BJ (cell line): ENCODE measurements at regions of chr9 and their contacts with region 1.

Region 1: DNA sequence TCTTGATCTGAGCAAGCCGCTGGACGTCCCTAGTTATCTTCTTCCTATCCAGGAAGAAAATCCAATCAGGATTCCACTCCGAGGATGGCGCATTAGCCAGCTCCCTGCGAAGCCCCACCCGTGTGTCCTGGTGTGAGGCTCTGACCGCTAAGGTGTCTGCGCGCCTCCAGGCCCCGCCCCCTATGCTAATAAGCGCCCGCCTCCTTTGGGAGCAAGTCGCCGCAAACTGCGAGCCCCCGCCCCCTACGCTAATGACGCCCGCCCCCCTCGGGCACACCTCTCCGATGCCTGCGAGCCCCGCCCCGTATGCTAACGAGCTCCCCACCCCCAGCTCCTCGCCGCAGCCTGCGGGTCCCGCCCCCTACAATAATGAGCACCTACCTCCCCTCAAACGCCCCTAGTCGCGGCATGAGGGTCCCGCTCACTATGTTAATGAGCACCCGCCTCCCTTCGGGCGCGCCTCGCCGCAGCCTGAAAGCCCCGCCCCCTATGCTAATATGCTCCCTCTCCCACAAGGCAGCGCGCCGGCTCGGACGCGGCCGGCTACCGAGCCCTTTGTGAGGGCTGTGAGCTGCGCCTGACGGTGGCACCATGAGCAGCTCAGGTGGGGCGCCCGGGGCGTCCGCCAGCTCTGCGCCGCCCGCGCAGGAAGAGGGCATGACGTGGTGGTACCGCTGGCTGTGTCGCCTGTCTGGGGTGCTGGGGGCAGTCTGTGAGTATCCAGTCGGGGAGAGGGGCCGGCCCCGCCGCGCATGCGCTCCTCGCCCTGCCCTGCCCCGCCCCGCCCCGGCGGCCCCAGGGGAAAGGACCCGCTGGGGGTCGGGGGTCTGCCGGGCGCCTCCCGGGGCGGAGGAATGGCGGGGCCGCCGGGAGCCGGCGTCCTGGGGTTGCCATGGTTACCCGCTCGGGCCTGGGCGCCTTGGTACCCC is at the start of gene CACFD1:
- DNase-seq: peak; percentile 55
- H3K4me3 ChIP-seq: peak within 1 kb of the TSS; percentile 47
- H3K27me3 ChIP-seq: no peaks in the 10 kb centered on the region
- CTCF ChIP-seq: no peak
- polyA plus RNA-seq, gene CACFD1: 15.8 and 19.1 TPM in 2 replicates

Region 2: DNA sequence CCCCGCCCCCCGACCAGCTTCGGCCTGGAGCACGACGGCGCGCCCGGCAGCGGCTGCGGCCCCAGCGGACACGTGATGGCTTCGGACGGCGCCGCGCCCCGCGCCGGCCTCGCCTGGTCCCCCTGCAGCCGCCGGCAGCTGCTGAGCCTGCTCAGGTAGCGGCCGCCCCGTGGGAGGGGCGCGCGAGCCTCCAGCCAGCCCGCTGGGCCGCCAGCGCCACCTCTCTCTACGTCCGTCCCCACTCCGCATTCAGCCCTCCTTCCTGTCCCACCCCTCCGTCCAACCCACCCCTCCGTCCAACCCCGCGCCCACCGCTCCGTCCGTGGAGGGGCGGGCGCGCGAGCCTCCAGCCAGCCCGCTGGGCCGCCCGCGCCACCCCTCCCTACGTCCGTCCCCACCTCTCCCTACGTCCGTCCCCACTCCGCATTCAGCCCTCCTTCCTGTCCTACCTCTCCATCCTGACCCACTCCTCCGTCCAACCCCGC is 31.1 kb before region 1 on chr9:
- CTCF ChIA-PET with region 1: no interaction called
- POLR2A ChIA-PET with region 1: interaction called, 11 read pairs
- DNase-seq: no peak
- H3K4me3 ChIP-seq: peak overlapping the region; percentile 25
- H3K27me3 ChIP-seq: peaks cover 9% of the 10 kb centered on the region
- CTCF ChIP-seq: no peak

Region 3: DNA sequence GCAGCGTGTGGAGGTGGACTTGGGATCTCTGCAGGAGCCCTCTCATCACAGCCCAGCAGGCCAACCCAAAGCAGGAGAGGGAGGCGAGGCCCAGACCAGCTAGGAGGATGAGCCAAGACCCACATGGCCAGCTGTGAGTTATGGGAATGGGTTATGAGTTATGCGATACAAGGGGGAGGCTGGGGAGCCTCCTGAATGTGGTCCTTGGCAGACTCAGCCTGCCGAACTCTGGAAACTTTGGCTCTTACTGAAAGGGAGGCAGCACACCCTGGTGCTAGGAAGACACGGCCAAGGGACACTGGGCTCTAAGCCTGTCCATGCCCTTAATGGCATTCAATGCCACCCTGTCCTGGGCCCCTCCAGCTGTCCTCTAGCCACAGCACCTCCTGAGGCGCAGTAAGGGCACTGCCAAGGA is 540.1 kb after region 1 on chr9:
- CTCF ChIA-PET with region 1: no interaction called
- POLR2A ChIA-PET with region 1: no interaction called
- DNase-seq: no peak
- H3K4me3 ChIP-seq: no peak overlapping the region
- H3K27me3 ChIP-seq: peaks cover 2% of the 10 kb centered on the region; the same call in 1 of the 2 replicates
- CTCF ChIP-seq: no peak